AG04450 (cell line): ENCODE measurements at regions of chr10 and their contacts with region 1.

Region 1: GRCh38 chr10:101141616-101142532 is 10.8 kb downstream of the TLX1 start:
- DNase-seq: peak; percentile 56
- H3K4me3 ChIP-seq: no peak overlapping the region
- H3K27ac ChIP-seq: no peak overlapping the region
- H3K27me3 ChIP-seq: peaks cover 93% of the 10 kb centered on the region
- CTCF ChIP-seq: peak; percentile 97

Region 2: DNA sequence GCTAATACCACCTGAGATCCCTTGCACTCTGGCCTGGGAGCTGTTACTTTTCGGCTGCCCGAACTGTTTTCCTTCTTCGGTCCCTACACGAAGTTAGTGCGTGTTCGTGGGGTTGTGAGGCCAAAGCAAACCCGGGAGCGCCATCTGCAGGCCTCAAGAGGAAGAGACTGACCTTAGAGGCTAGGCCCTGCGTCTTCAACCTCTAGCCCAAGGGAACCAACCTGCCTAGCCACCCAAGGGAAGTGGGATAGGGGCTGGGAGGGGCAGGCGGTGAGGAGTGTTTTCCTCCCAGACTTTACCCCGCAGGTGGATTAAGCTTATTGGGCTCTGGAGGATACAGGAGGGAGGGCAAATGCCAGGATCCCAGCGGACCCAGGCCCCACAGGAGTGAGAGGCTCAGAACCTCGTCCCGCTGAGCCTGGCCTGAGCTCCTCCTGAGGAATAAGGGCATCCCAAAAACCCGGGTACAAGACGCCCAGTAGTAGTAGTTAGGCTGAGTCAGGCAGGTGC is 398.2 kb before region 1 on chr10:
- CTCF ChIA-PET with region 1: no interaction called
- POLR2A ChIA-PET with region 1: no interaction called
- DNase-seq: no peak
- H3K4me3 ChIP-seq: no peak overlapping the region
- H3K27ac ChIP-seq: no peak overlapping the region
- H3K27me3 ChIP-seq: peaks cover 94% of the 10 kb centered on the region
- CTCF ChIP-seq: peak; percentile 57

Region 3: DNA sequence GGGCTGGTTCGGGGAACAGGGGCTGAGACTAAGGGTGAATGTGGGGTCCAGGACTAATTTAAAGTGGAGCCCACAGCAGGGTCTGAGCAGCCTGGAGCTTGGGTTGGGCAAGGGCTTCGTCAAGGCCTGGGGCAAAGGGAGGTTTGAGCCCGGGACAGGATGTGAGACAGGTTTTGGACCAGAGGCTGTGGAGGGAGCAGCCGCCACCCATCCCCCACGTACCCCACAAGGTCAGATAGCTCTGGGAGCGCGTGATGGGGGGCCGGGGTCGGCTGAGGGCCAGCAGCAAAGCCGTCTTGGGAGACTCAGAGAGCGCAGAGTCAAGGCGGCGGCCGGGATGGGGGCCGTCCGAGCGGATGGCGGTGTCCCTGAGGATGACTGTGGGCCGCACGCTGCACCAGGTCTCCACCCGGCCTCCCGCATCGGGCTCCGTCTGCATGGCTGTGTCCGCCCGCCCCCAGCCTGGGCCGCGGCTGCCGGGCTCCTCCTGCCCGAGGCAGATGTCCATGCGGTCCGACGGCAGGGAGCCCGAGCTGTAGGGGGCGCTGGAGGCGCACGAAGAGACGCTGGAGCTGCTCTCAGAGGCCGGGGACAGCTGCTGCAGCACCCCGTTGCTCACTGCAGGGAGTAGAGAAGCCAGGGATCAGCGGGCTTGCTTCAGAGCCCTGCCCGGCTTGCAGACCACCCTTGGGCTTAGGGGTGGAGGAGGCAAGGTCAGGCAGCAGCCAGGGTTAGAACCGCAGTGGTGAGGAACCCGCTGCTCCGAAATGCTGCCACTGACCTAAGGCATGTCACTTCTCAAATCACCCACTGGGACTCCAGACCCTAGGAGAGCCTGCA is 123.1 kb before region 1 on chr10:
- CTCF ChIA-PET with region 1: interaction called, 13 read pairs
- POLR2A ChIA-PET with region 1: no interaction called
- DNase-seq: no peak
- H3K4me3 ChIP-seq: no peak overlapping the region
- H3K27ac ChIP-seq: no peak overlapping the region
- H3K27me3 ChIP-seq: no peaks in the 10 kb centered on the region
- CTCF ChIP-seq: peak; percentile 78

Region 4: DNA sequence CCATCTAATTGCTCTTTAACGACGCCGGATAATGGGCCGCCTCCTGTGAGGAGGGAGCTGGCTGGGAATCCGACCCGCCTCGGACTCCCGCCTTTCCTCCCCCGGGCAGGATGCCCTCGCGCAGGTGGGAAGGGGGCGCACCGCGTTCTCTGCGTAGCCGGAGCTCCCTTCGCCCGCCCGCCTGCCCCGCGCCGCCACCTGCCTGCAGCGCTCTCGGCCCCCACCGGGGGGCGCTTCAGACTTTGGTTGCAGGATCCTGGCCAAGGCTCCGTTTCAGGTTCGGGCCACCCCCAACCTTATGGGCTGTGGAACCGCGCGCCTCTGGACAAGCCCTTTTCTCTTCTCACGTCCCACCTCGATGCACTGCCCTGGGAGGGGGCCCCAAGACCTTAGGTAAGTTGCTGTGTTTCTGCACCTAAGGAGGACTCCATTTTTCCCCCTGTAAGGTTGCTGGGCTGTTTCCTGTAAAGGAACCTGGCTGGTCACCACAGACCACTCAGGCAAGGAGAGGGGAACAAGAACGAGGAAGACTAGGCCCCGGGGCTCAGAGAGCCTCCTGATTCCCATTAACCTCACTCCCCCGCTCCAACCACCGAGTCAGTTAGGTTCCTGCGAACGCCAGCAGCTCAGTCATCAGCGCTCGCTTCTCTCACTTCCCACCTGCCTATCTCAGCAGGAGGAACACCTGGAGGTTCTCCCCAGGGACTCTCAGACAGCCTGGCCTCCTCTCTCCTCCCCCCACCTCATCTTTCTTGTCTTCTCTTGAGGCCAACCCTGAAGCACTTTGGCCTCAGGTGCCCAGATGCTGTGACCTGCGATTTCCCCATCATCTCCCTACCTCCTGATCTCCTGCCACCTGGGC is 91.4 kb before region 1 on chr10:
- CTCF ChIA-PET with region 1: interaction called, 45 read pairs
- POLR2A ChIA-PET with region 1: no interaction called
- DNase-seq: no peak
- H3K4me3 ChIP-seq: peak overlapping the region; percentile 39
- H3K27ac ChIP-seq: peak overlapping the region; percentile 11
- H3K27me3 ChIP-seq: peaks cover 17% of the 10 kb centered on the region
- CTCF ChIP-seq: peak; percentile 85

Region 5: DNA sequence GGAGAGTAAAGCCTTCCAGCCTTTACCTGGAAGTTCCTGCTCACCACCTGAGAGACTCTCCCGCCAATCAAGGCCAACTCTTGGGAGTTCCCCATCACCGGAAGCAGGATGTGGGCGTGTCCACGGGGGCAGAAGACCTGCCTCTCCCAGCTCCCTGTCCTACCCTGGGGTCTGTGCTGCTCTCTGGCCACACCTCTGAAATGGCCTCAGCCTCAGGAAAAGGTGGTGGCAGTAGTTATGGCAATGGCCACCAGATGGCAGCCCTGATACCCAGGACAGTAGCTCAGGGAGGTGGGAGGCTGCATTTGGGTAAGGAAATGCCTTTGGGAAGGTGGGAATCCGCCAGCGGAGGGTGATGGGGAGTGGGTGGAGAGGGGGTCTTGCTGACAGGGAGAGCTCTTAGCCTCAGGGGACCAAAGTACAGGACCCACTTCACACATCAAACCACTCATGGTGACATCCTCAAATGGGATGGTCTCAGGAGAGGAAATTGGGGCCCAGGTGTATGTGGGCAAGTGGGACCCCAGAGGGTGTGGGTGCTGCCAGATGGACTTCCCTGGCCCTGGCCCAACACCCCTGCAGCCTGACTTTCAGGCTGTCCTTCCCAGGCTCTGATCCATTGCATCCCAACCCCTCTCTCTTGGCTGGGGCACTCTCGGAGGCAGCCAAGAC is 46.2 kb before region 1 on chr10:
- CTCF ChIA-PET with region 1: interaction called, 304 read pairs
- POLR2A ChIA-PET with region 1: interaction called, 6 read pairs
- DNase-seq: peak; percentile 11
- H3K4me3 ChIP-seq: no peak overlapping the region
- H3K27ac ChIP-seq: no peak overlapping the region
- H3K27me3 ChIP-seq: peaks cover 66% of the 10 kb centered on the region
- CTCF ChIP-seq: peak; percentile 83

Region 6: GRCh38 chr10:101126684-101127628 is 14.9 kb before region 1 on chr10:
- CTCF ChIA-PET with region 1: interaction called, 12 read pairs
- POLR2A ChIA-PET with region 1: no interaction called
- DNase-seq: no peak
- H3K4me3 ChIP-seq: no peak overlapping the region
- H3K27ac ChIP-seq: no peak overlapping the region
- H3K27me3 ChIP-seq: peaks cover 92% of the 10 kb centered on the region
- CTCF ChIP-seq: no peak

Region 7: GRCh38 chr10:101161494-101162299 is 19.8 kb after region 1 on chr10:
- CTCF ChIA-PET with region 1: interaction called, 13 read pairs
- POLR2A ChIA-PET with region 1: no interaction called
- DNase-seq: peak; percentile 43
- H3K4me3 ChIP-seq: peak overlapping the region; percentile 57
- H3K27ac ChIP-seq: no peak overlapping the region
- H3K27me3 ChIP-seq: peaks cover 42% of the 10 kb centered on the region
- CTCF ChIP-seq: peak; percentile 94

Region 8: GRCh38 chr10:101228153-101228973 is 86.5 kb after region 1 on chr10:
- CTCF ChIA-PET with region 1: no interaction called
- POLR2A ChIA-PET with region 1: no interaction called
- DNase-seq: no peak
- H3K4me3 ChIP-seq: no peak overlapping the region
- H3K27ac ChIP-seq: no peak overlapping the region
- H3K27me3 ChIP-seq: peaks cover 90% of the 10 kb centered on the region
- CTCF ChIP-seq: no peak